OCI-LY7 (cell line): ENCODE measurements at regions of chr6 and their contacts with region 1.

Region 1: DNA sequence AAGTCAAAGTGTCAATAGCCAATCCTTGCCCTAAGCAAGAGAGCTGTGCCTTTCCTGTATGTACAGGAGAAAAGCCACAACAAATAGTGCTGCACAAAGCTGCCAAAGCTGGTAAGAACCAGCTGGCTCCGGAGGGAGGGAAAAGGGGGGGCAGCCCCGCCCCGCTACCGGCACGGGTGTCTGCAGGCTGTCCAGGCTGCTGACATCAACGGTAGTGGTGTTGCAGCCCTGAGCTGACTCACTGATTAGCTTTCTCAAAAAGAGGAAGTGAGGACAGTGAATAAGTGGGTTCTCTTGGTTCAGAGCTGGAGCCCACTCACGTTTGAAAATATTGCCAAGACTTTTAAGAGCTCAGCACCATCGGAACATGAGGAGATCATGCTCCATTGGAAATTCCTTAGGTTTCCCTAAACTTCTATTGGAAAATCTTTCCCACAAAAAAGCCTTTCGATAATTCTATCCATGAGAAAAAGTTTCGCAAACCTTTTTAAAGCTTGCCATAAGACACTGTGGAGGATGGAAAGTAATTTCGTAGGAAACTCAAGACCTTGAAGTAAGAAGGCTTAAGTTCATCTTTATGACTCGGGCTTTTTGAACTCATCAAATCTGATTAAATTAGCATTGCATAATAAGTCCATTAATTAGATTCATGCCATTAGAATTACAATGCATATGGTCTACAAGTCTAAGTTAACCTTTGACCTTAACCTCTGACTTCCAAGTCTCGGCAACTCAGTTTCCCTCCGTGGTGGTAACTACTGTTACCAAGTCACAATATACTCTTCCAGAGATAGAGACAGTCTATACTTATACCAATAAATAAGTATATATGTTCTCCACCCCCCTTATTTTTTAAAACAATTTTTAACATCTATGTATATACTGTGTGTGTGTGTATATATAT is 67.0 kb downstream of the TNFRSF21 start:
- DNase-seq: peak; percentile 98
- H3K4me3 ChIP-seq: peak overlapping the region; percentile 46
- H3K27ac ChIP-seq: peak overlapping the region; percentile 92
- H3K4me1 ChIP-seq: peaks cover 84% of the 10 kb centered on the region
- CTCF ChIP-seq: no peak

Region 2: DNA sequence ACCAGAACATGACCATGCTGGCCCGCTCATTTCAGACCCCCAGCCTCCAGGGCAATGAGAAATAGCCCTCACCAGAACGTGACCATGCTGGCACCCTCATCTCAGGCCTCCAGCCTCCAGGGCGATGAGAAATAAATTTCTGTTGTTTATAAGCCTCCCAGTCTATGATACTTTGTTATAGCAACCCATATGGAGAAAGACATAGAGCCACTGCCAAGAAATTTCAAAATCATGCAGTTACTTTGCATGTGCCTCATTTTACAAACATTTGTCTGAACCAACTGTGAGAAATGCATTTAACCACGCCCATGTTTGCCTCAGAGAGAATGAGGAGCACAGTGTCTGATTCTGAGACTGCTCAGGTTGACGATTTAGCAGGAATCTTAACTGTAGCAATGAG is 605.6 kb before region 1 on chr6:
- CTCF ChIA-PET with region 1: no interaction called
- POLR2A ChIA-PET with region 1: interaction called, 4 read pairs
- intact Hi-C with region 1: loop called (anchors 5 kb)
- DNase-seq: peak; percentile 78
- H3K4me3 ChIP-seq: peak overlapping the region; percentile 66
- H3K27ac ChIP-seq: peak overlapping the region; percentile 97
- H3K4me1 ChIP-seq: peaks cover 98% of the 10 kb centered on the region
- CTCF ChIP-seq: no peak

Region 3: GRCh38 chr6:46652603-46653438 is 589.9 kb before region 1 on chr6 and contains the starts of genes CYP39A1 and SLC25A27:
- CTCF ChIA-PET with region 1: no interaction called
- POLR2A ChIA-PET with region 1: interaction called, 3 read pairs
- intact Hi-C with region 1: loop called (anchors 2 kb)
- DNase-seq: peak; percentile 90
- H3K4me3 ChIP-seq: peak within 1 kb of the TSS; percentile 85
- H3K27ac ChIP-seq: peak within 1 kb of the TSS; percentile 96
- H3K4me1 ChIP-seq: peaks cover 10% of the 10 kb centered on the region
- CTCF ChIP-seq: no peak
- total RNA-seq, gene CYP39A1: 13.4 and 15.4 TPM in 2 replicates
- total RNA-seq, gene SLC25A27: 155 and 175 TPM in 2 replicates

Region 4: GRCh38 chr6:47097092-47097945 is 145.4 kb before region 1 on chr6:
- CTCF ChIA-PET with region 1: no interaction called
- POLR2A ChIA-PET with region 1: interaction called, 6 read pairs
- intact Hi-C with region 1: loop called (anchors 2 kb)
- DNase-seq: peak; percentile 90
- H3K4me3 ChIP-seq: no peak overlapping the region
- H3K27ac ChIP-seq: no peak overlapping the region
- H3K4me1 ChIP-seq: peaks cover 15% of the 10 kb centered on the region
- CTCF ChIP-seq: peak; percentile 97

Region 5: DNA sequence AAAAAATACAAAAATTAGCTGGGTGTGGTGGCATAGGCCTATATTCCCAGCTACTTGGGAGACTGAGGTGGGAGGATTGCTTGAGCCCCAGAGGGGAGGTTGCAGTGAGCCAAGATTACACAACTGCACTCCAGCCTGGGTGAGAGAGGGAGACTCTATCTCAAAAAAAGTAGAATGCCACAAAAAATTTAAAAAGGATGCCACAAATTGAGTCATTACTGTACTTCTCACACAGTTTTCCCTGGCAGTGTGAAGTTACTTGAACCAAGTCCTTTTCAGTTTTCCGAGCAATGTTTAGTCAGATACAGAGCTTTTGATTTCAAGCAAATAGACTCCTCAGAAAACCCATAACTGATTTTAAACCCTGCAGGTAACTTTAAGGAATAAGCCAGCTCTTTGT is 13.6 kb after region 1 on chr6:
- CTCF ChIA-PET with region 1: no interaction called
- POLR2A ChIA-PET with region 1: interaction called, 16 read pairs
- intact Hi-C with region 1: no loop called
- DNase-seq: no peak
- H3K4me3 ChIP-seq: no peak overlapping the region
- H3K27ac ChIP-seq: no peak overlapping the region
- H3K4me1 ChIP-seq: peaks cover 43% of the 10 kb centered on the region
- CTCF ChIP-seq: no peak

Region 6: DNA sequence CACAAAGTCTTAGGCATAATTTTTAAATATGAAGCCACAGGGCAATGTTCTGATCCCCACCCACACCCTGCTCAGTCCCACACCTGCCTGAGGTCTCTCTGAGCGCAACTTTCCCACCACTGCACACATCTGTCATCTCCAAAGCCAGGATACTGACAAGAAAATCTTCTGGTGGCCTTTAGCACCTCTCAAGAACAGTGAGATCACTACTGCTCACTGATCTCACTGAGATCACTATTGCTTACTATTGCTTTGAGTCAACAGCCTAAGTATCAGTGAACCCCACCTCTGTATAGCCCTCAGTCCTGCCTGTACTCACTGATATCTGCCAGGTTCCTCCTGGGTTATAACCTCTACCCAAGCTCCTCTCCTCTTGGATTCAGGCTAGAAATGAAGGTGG is 60.6 kb after region 1 on chr6:
- CTCF ChIA-PET with region 1: no interaction called
- POLR2A ChIA-PET with region 1: interaction called, 48 read pairs
- intact Hi-C with region 1: no loop called
- DNase-seq: no peak
- H3K4me3 ChIP-seq: no peak overlapping the region
- H3K27ac ChIP-seq: no peak overlapping the region
- H3K4me1 ChIP-seq: peaks cover 53% of the 10 kb centered on the region
- CTCF ChIP-seq: no peak

Region 7: DNA sequence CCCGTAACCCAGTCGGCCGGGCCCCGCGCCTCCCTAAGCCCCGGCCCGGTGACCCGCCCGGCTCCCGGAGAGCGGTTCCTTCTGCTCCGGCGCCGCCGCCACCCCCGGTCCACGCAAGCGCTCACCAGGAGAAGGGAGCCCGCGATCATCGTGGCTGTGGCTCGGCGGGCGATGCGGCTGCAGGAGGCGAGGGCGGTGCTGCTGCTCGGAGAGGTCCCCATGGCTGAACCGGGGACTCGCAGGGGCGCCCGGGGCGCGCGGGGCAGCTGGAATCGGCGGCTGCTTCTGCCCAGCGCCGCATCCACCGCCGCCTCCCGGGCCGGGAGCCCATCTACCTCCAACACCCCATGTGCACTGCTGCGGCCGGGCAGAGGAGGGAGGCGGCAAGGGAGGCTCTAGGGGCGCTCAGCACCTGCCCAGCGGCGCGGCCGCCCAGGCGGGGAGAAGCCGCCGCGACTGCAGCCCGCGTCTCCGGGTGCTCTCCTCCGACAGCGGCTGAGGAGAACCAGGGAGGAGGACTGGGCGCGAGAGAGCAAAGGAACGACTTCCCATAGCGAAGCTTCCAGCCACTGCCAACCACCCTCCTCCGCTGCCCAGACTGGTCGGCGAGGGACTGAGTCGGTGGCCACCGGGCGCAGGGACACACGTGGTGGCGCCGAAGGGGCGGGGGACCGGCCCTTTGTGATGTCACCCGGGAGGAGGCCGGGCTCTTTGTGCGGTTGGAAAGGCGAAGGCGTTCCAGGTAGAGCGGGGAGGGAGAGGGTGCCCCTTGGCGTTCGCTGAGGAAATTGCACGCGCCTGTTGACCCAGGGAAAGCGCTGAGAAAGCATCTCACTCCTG is 66.8 kb after region 1 on chr6 and contains the start of gene TNFRSF21:
- CTCF ChIA-PET with region 1: no interaction called
- POLR2A ChIA-PET with region 1: interaction called, 48 read pairs
- intact Hi-C with region 1: loop called (anchors 1 kb)
- DNase-seq: peak; percentile 93
- H3K4me3 ChIP-seq: peak within 1 kb of the TSS; percentile 95
- H3K27ac ChIP-seq: peak within 1 kb of the TSS; percentile 62
- H3K4me1 ChIP-seq: peaks cover 46% of the 10 kb centered on the region
- CTCF ChIP-seq: peak; percentile 86
- total RNA-seq, gene TNFRSF21: 22.7 and 28.1 TPM in 2 replicates

Region 8: DNA sequence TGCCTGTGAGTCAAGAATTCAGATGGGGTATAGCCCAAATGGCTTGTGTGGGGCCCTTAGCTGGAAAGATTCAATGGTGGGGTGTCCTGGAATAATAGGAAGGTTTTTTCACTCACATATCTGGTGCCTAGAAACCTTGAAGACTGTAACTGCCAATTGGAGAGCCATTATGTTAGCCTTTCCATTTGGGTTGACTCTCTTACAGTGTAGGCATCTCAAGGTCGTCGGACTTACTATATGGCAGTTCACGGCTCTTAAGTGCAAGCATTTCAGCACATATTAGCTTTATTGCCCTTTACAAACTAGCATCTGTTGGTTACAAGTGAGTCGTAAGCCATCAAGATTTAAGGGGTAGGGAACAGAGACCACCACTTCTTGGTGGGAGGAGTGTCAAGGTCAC is 308.9 kb after region 1 on chr6:
- CTCF ChIA-PET with region 1: no interaction called
- POLR2A ChIA-PET with region 1: no interaction called
- intact Hi-C with region 1: no loop called
- DNase-seq: no peak
- H3K4me3 ChIP-seq: no peak overlapping the region
- H3K27ac ChIP-seq: no peak overlapping the region
- H3K4me1 ChIP-seq: no peaks in the 10 kb centered on the region
- CTCF ChIP-seq: no peak